ENCODE measurements at regions of chr17 and their contacts with region 1.

Region 1: DNA sequence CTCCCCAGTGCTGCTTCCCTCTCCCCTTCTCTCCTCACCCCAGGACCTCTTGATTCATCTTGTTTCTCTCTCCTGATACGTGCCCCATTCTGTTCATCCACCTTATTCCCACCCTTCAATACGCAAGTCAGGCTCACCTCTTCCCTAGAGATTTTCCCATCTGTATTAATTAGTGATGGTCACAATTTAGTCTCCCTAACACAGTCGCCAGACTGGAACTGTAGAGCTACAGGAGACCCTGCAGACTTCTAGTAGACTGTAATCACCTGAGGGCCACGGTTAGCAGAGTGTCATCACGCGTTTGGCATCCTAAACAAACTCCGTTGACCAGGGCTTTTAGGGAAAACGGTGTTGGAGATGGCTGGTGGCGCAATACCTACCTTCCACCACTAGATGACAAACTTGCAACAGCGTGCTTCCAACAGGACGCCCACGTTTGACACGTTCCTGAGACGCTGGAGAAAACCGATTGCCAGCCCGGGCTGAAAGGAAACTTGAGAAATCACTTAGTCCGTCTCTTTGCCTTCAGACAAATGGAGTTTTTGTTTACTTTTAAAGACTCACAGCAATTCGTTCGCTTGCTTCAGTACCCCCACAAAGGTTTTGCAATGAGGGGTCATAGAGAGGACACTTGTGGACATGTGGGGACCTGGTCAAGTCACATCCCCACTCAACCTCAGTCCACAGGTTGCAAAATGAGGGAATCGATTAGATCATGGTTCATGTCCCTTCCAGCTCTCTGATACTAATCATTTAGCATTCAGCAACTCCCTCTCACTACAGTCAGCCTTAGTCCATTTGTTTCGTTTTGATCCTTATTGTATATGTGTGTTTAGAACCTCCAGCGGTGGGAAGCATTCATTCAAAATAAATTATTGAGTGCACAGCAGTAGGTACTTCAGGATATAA is 20.6 kb downstream of the MYL4 start:
- DNase-seq: peak; percentile 61 to 94 (median 85)

Region 2: DNA sequence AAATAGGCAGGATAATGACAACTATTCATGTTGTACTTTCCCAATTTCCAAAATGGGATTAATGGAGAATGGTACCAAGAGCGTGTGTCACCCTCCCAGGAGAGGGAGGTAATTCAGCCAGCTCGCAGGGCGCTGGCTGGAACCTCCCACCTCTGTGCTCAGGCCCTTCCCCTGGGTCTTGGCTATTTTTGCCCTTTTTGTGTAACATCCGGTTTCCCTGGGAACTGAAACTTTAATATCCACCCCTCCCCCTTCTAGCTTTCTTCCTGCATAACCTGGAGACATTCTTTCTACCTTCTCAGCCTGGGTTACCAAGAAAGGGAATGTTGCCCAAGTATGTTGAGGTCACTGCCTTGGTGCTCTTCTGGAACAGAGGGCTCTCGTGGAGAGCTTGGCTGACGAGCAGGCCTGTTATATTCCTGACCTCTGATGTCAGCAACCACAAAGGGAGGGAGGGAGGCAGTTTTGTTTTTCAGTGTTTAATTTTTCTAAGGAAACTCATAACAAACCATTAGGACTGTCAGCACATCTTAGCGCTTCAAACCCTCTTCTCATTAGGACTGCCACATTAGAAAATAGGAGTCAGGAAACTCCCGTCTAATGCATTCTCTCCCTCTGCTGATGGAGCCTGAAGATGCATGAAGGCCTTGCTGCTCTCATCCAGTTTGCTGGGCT is 49.4 kb after region 1 on chr17:
- intact Hi-C with region 1: no loop called
- DNase-seq: peak in 4 of 42 donors; percentile 6 to 27 (median 18)

Region 3: DNA sequence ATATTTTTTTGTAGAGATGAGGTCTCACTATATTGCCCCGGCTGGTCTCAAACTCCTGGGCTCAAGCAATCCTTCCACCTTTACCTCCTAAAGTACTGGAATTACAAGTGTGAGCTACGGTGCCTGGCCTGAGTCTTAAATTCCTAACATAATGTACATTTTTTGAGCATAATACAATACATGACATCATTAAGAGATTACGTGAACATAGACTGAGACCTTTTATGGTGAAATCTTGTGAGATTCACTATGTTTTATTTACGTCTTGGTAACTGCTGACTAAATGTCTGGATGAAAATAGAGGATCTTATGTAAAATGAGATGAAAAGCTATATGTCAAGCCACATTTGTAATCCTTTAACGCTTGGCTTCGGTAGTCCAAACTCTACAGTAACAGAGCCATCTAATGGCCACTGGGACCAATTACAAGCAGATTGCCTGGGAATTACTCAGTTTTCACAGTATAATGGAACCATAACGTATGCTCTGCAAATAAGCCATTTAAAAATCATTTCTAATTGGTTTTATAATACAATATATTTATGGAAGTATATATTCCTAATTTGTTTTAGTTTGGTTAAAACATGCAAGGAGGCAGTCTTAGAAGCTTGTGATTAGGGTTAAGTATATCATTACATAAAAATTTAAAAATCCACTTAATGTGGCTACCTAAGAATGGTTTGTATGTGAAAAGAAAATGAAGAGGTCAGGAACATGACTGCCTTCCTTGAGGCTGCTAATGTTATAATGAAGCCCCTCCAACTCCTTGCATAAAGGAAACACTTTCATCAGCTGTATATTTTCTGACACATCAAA is 85.9 kb after region 1 on chr17:
- intact Hi-C with region 1: loop called (anchors 2 kb)
- DNase-seq: peak in 26 of 42 donors; percentile 16 to 75 (median 55)